ENCODE measurements at regions of chr18 and their contacts with region 1.

Region 1: GRCh38 chr18:9066817-9067306 is 35.6 kb upstream of the NDUFV2 start:
- DNase-seq: no peak
- H3K4me3 Mint-ChIP-seq: no peak overlapping the region
- H3K27ac Mint-ChIP-seq: no peak overlapping the region
- H3K4me1 Mint-ChIP-seq: peaks cover 8% of the 10 kb centered on the region
- H3K27me3 Mint-ChIP-seq: peaks cover 5% of the 10 kb centered on the region

Region 2: GRCh38 chr18:9082711-9083510 is 16.0 kb after region 1 on chr18:
- CTCF ChIA-PET with region 1: interaction called, 27 read pairs
- intact Hi-C with region 1: no loop called
- DNase-seq: peak; percentile 82
- H3K4me3 Mint-ChIP-seq: peak overlapping the region; percentile 67
- H3K27ac Mint-ChIP-seq: peak overlapping the region; percentile 92
- H3K4me1 Mint-ChIP-seq: peaks cover 30% of the 10 kb centered on the region
- H3K27me3 Mint-ChIP-seq: no peaks in the 10 kb centered on the region

Region 3: GRCh38 chr18:9259173-9259572 is 192.3 kb after region 1 on chr18:
- CTCF ChIA-PET with region 1: no interaction called
- intact Hi-C with region 1: loop called (anchors 5 kb)
- DNase-seq: no peak
- H3K4me3 Mint-ChIP-seq: no peak overlapping the region
- H3K27ac Mint-ChIP-seq: no peak overlapping the region
- H3K4me1 Mint-ChIP-seq: peaks cover 5% of the 10 kb centered on the region
- H3K27me3 Mint-ChIP-seq: no peaks in the 10 kb centered on the region

Region 4: GRCh38 chr18:9404565-9405060 is 337.8 kb after region 1 on chr18:
- CTCF ChIA-PET with region 1: no interaction called
- intact Hi-C with region 1: loop called (anchors 5 kb)
- DNase-seq: peak; percentile 68
- H3K4me3 Mint-ChIP-seq: peak overlapping the region; percentile 70
- H3K27ac Mint-ChIP-seq: peak overlapping the region; percentile 57
- H3K4me1 Mint-ChIP-seq: peaks cover 10% of the 10 kb centered on the region
- H3K27me3 Mint-ChIP-seq: no peaks in the 10 kb centered on the region

Region 5: DNA sequence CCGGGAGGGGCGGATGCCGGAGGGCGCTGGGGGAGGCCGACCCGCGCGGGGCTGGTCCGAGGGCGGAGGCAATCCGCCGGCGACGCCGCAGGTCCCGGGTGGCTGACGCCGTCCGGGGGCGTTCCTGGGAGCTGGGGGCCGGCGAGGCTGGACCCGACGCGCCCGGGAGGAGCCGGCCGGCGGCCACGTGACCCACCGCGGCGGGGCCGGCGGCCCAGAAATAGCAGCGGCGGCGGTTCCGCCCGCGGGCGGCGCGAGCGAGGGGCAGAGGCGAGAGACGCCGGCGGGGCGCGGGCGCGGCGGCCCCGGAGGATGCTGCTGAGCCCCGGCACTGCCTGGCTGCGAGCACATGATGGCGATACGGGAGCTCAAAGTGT is 641.2 kb after region 1 on chr18 and contains the start of gene RAB31:
- CTCF ChIA-PET with region 1: no interaction called
- intact Hi-C with region 1: loop called (anchors 5 kb)
- DNase-seq: peak; percentile 24
- H3K4me3 Mint-ChIP-seq: peak within 1 kb of the TSS; percentile 74
- H3K27ac Mint-ChIP-seq: no peak within 1 kb of the TSS
- H3K4me1 Mint-ChIP-seq: peaks cover 28% of the 10 kb centered on the region
- H3K27me3 Mint-ChIP-seq: peaks cover 80% of the 10 kb centered on the region
- total RNA-seq, gene RAB31: 0.38 to 0.89 TPM

Measured in activated naive CD4-positive, alpha-beta T cell treated with anti-CD3 and anti-CD28 coated beads for 36 hours (primary cell).